B cell (primary cell): ENCODE measurements at regions of chr17 and their contacts with region 1.

Region 1: GRCh38 chr17:58317421-58318064 is 11.1 kb downstream of the TSPOAP1 start:
- DNase-seq: peak; percentile 87
- ATAC-seq: peak; percentile 97
- H3K4me3 ChIP-seq: no peak overlapping the region
- H3K4me3 Mint-ChIP-seq: peak overlapping the region; percentile 33
- H3K27ac ChIP-seq: peak overlapping the region; percentile 53 to 76
- H3K27ac Mint-ChIP-seq: peak overlapping the region; percentile 96
- H3K4me1 ChIP-seq: peaks cover 11 to 12% of the 10 kb centered on the region in 2 donors
- H3K4me1 Mint-ChIP-seq: peaks cover 14% of the 10 kb centered on the region
- H3K27me3 ChIP-seq: no peaks in the 10 kb centered on the region
- H3K27me3 Mint-ChIP-seq: no peaks in the 10 kb centered on the region
- CTCF ChIP-seq: peak; percentile 84

Region 2: GRCh38 chr17:58329035-58329809 is 11.7 kb after region 1 on chr17:
- CTCF ChIA-PET with region 1: interaction called, 70 read pairs
- POLR2A ChIA-PET with region 1: interaction called, 44 read pairs
- intact Hi-C with region 1: loop called (anchors 1 kb)
- DNase-seq: peak; percentile 88
- ATAC-seq: peak; percentile 37
- H3K4me3 ChIP-seq: peak overlapping the region; percentile 81 to 100 (median 99)
- H3K4me3 Mint-ChIP-seq: peak overlapping the region; percentile 91
- H3K27ac ChIP-seq: peak overlapping the region; percentile 73 to 85
- H3K27ac Mint-ChIP-seq: peak overlapping the region; percentile 93
- H3K4me1 ChIP-seq: peaks cover 36 to 69% of the 10 kb centered on the region in 2 donors
- H3K4me1 Mint-ChIP-seq: peaks cover 61% of the 10 kb centered on the region
- H3K27me3 ChIP-seq: no peaks in the 10 kb centered on the region
- H3K27me3 Mint-ChIP-seq: no peaks in the 10 kb centered on the region
- CTCF ChIP-seq: peak; percentile 79

Region 3: GRCh38 chr17:58352014-58352842 is 34.7 kb after region 1 on chr17 and contains the start of gene SUPT4H1:
- CTCF ChIA-PET with region 1: interaction called, 587 read pairs
- POLR2A ChIA-PET with region 1: interaction called, 663 read pairs
- intact Hi-C with region 1: loop called (anchors 1 kb)
- DNase-seq: peak; percentile 98
- ATAC-seq: peak; percentile 94
- H3K4me3 ChIP-seq: peak within 1 kb of the TSS; percentile 82 to 99 (median 91)
- H3K4me3 Mint-ChIP-seq: peak within 1 kb of the TSS; percentile 100
- H3K27ac ChIP-seq: peak within 1 kb of the TSS; percentile 91 to 95
- H3K27ac Mint-ChIP-seq: peak within 1 kb of the TSS; percentile 99
- H3K4me1 ChIP-seq: peaks cover 21 to 28% of the 10 kb centered on the region in 2 donors
- H3K4me1 Mint-ChIP-seq: peaks cover 47% of the 10 kb centered on the region
- H3K27me3 ChIP-seq: no peaks in the 10 kb centered on the region
- H3K27me3 Mint-ChIP-seq: no peaks in the 10 kb centered on the region
- CTCF ChIP-seq: no peak
- total RNA-seq, gene SUPT4H1: 49.3 and 60.1 TPM in 2 replicates

Region 4: DNA sequence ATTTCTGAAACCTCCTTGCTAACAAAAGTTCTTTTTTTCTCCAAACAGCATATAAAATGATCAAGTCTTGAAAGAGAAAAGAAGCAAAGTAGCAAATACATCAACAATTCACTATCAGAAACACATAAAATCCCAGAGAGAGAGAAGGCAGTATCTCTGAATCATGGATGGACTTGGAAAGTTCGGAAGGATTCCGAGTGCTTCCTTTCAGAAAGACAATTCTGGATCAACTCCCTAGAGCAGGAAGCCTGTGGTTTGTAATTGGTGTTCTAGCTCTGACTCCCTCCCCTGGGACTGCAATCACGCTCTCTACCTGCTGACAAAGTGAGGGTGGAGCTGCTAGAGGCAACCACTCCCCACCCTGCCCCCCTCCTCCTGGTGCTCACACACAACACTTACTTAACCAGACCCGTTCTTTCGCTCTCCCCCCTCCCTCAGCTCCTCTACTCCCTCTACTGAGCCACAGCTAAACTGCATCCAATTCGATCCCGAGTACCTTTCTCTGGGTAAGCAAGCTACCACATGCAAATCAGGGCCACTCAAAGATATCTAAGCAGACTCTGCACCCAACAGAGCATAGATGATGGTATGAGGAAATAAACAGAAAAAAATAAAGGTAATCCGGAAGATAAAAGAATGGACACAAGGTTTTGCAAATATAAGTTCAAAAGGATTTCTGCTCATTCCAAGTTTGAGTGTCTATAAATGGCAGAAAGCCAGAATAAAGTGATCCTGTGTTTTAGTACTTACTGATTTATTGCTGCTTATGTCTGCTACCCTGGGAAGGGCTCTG is 100.0 kb after region 1 on chr17 and contains the start of gene RNF43:
- CTCF ChIA-PET with region 1: interaction called, 131 read pairs
- POLR2A ChIA-PET with region 1: interaction called, 6 read pairs
- intact Hi-C with region 1: loop called (anchors 1 kb)
- DNase-seq: peak; percentile 96
- ATAC-seq: peak; percentile 100
- H3K4me3 ChIP-seq: peak within 1 kb of the TSS in 1 of 5 experiments; percentile 20
- H3K4me3 Mint-ChIP-seq: peak within 1 kb of the TSS; percentile 8
- H3K27ac ChIP-seq: peak within 1 kb of the TSS; percentile 61 to 65
- H3K27ac Mint-ChIP-seq: peak within 1 kb of the TSS; percentile 51
- H3K4me1 ChIP-seq: peaks cover 14 to 16% of the 10 kb centered on the region in 2 donors
- H3K4me1 Mint-ChIP-seq: peaks cover 21% of the 10 kb centered on the region
- H3K27me3 ChIP-seq: no peaks in the 10 kb centered on the region
- H3K27me3 Mint-ChIP-seq: no peaks in the 10 kb centered on the region
- CTCF ChIP-seq: peak; percentile 77
- total RNA-seq, gene RNF43: 2.5 and 3.2 TPM in 2 replicates

Region 5: GRCh38 chr17:58447039-58447975 is 129.8 kb after region 1 on chr17:
- CTCF ChIA-PET with region 1: interaction called, 86 read pairs
- POLR2A ChIA-PET with region 1: interaction called, 3 read pairs
- intact Hi-C with region 1: loop called (anchors 1 kb)
- DNase-seq: peak; percentile 74
- ATAC-seq: peak; percentile 87
- H3K4me3 ChIP-seq: no peak overlapping the region
- H3K4me3 Mint-ChIP-seq: no peak overlapping the region
- H3K27ac ChIP-seq: no peak overlapping the region
- H3K27ac Mint-ChIP-seq: peak overlapping the region; percentile 13
- H3K4me1 ChIP-seq: no peaks in the 10 kb centered on the region
- H3K4me1 Mint-ChIP-seq: peaks cover 11% of the 10 kb centered on the region
- H3K27me3 ChIP-seq: no peaks in the 10 kb centered on the region
- H3K27me3 Mint-ChIP-seq: no peaks in the 10 kb centered on the region
- CTCF ChIP-seq: peak; percentile 71